H1 (cell line): ENCODE measurements at regions of chr11 and their contacts with region 1.

Region 1: DNA sequence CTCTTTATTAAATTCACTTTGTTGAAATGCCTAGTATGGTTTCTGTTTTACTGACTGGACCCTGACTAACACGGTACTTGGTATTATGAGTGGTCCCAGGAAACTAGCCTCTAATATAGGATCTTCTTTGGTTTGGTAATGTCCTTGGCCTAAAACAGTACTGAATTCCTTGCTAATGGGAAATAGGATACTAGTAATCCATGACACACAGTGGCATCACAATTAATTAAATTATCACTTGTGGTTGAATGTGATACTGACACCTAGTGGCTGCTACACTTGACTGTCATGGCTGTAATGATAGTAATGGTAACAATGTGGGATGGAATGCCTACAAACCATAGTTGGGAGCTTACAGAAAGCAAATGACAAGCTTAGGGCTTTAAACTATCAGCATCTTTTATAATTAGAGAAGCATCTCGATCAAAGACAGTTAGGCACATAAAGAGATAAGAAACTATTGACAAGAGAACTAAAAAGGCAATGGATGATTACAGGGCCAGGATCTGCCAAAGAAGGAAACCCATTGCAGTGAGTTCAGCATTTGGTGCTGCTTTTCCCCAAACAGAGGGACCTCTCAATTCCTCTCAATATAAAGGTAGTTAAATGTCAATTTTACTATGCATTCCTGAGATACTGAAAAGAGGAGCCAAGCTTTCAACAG is 8.6 kb downstream of the DNHD1 start:
- DNase-seq: no peak
- H3K4me3 ChIP-seq: no peak overlapping the region
- H3K27ac ChIP-seq: no peak overlapping the region
- H3K4me1 ChIP-seq: no peaks in the 10 kb centered on the region
- H3K27me3 ChIP-seq: no peaks in the 10 kb centered on the region
- CTCF ChIP-seq: peak in 2 of 3 experiments; percentile 46 to 86; a peak in 2 of 4 replicates
- EP300 ChIP-seq: no peak
- POLR2A ChIP-seq: no peak
- RAD21 ChIP-seq: peak; percentile 51 to 63

Region 2: DNA sequence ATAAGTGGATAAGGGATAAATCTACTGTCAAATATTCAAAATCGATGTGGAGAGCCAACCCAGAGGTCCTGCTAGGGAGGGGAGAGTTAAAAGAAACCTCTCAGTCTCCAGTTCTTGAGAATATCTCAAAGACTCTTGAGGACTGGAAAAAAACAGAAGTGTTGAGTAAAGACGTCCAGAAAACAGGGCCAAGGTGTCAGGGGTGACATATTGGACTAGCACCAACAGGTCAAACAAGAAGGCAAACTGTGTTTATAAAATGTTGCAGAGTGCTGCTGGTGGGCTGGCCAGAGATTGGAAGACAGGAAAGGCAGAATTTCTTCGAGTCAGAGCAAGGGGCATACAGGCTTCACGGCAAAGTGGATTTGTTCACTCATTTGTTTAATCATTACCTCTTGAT is 149.2 kb before region 1 on chr11:
- CTCF ChIA-PET with region 1: no interaction called
- POLR2A ChIA-PET with region 1: no interaction called
- DNase-seq: no peak
- H3K4me3 ChIP-seq: no peak overlapping the region
- H3K27ac ChIP-seq: no peak overlapping the region
- H3K4me1 ChIP-seq: no peaks in the 10 kb centered on the region
- H3K27me3 ChIP-seq: no peaks in the 10 kb centered on the region
- CTCF ChIP-seq: no peak
- EP300 ChIP-seq: no peak
- POLR2A ChIP-seq: no peak
- RAD21 ChIP-seq: no peak

Region 3: DNA sequence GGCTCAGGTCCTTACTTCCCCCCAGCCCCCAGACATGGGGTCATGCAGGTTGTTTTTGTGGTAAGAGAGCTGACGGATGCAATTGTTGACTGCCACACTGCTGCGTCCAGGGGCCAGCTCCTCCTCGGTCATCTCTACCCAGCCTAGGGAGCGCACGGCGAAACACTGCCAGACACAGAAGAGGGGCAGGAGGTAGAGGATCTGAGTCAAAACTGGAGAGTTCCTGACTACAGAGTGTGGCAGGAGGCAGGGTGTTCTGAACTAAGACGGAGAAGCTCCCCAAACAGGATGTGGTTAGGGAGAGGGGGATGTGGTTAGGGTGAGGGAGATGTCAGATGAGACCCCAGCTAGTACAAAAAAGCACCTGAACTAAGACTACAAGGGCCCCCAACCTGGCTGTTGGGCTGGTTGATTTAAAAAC is 103.1 kb before region 1 on chr11:
- CTCF ChIA-PET with region 1: interaction called, 11 read pairs
- POLR2A ChIA-PET with region 1: no interaction called
- DNase-seq: no peak
- H3K4me3 ChIP-seq: no peak overlapping the region
- H3K27ac ChIP-seq: no peak overlapping the region
- H3K4me1 ChIP-seq: peaks cover 8 to 15% (median 10%) of the 10 kb centered on the region in 4 experiments
- H3K27me3 ChIP-seq: no peaks in the 10 kb centered on the region
- CTCF ChIP-seq: no peak
- EP300 ChIP-seq: no peak
- POLR2A ChIP-seq: no peak
- RAD21 ChIP-seq: no peak

Region 4: GRCh38 chr11:6481012-6481923 is 24.4 kb before region 1 on chr11 and contains the starts of genes ARFIP2 and TIMM10B:
- CTCF ChIA-PET with region 1: interaction called, 25 read pairs
- POLR2A ChIA-PET with region 1: interaction called, 6 read pairs
- DNase-seq: peak; percentile 84 to 95
- H3K4me3 ChIP-seq: peak within 1 kb of the TSS; percentile 89 to 100 (median 100)
- H3K27ac ChIP-seq: peak within 1 kb of the TSS; percentile 93
- H3K4me1 ChIP-seq: peaks cover 4 to 13% (median 5%) of the 10 kb centered on the region in 4 experiments
- H3K27me3 ChIP-seq: no peaks in the 10 kb centered on the region
- CTCF ChIP-seq: no peak
- EP300 ChIP-seq: peak in 1 of 2 experiments; percentile 70; a peak in 1 of 3 replicates
- POLR2A ChIP-seq: peak; percentile 76 to 90
- RAD21 ChIP-seq: no peak
- total RNA-seq, gene ARFIP2: 48.7 and 51.1 TPM in 2 replicates
- total RNA-seq, gene TIMM10B: 38.2 and 45.6 TPM in 2 replicates

Region 5: DNA sequence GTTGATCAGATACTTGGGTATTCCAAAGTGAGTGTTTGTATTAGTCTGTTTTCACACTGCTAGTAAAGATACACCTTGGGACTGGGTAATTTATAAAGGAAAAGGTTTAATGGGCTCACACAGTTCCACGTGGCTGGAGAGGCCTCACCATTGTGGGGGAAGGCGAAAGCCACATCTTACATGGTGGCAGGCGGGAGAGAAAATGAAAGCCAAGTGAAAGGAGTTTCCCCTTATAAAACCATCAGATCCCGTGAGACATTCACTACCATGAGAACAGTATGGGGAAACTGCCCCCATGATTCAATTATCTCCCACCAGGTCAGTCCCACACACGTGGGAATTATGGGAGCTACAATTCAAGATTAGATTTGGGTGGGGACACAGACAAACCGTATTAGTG is 17.4 kb before region 1 on chr11:
- CTCF ChIA-PET with region 1: interaction called, 32 read pairs
- POLR2A ChIA-PET with region 1: interaction called, 8 read pairs
- DNase-seq: no peak
- H3K4me3 ChIP-seq: no peak overlapping the region
- H3K27ac ChIP-seq: no peak overlapping the region
- H3K4me1 ChIP-seq: no peaks in the 10 kb centered on the region
- H3K27me3 ChIP-seq: no peaks in the 10 kb centered on the region
- CTCF ChIP-seq: no peak
- EP300 ChIP-seq: no peak
- POLR2A ChIP-seq: no peak
- RAD21 ChIP-seq: no peak

Region 6: DNA sequence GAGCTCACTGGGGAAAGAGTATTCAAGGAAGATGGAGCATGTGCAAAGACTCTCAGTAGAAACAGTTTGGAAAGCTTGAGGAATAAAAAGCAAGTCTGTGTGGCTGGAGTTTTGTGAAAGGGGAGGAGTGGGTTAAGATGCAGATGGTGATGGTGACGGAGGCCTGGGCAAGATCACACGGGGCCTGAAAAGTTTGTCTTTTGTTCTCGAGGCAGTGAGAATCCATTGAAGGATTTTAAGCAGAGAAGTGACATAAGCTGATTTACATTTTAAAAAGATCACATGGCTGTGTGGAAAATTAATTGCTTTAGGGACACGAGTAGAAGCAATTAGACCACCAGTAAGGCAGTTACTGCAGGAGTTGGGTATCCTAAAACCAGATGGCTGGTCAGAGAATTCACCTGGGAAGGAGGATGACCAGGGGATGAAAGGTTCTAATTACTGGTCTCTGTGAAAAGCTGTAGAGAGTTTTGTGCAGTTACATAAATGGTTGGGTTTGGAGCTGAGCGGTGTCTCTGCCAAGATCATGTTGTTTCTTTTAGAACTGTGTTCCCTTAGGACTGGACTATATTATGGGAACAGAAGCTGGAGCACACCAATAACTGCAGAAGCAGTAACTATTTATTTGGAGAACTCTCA is 90.6 kb after region 1 on chr11:
- CTCF ChIA-PET with region 1: interaction called, 13 read pairs
- POLR2A ChIA-PET with region 1: no interaction called
- DNase-seq: peak in 1 of 2 experiments; percentile 16
- H3K4me3 ChIP-seq: no peak overlapping the region
- H3K27ac ChIP-seq: no peak overlapping the region
- H3K4me1 ChIP-seq: no peaks in the 10 kb centered on the region
- H3K27me3 ChIP-seq: no peaks in the 10 kb centered on the region
- CTCF ChIP-seq: no peak
- EP300 ChIP-seq: no peak
- POLR2A ChIP-seq: no peak
- RAD21 ChIP-seq: no peak